ENCODE measurements at regions of chr11 and their contacts with region 1.

Region 1: GRCh38 chr11:85941380-85941973 is 86.3 kb downstream of the CCDC83 start:
- DNase-seq: peak; percentile 37
- H3K4me3 ChIP-seq: no peak overlapping the region
- H3K27ac ChIP-seq: no peak overlapping the region
- H3K4me1 ChIP-seq: no peaks in the 10 kb centered on the region
- H3K27me3 ChIP-seq: no peaks in the 10 kb centered on the region
- CTCF ChIP-seq: peak in 3 of 4 experiments; percentile 55 to 70 (median 61)
- POLR2A ChIP-seq: no peak

Region 2: DNA sequence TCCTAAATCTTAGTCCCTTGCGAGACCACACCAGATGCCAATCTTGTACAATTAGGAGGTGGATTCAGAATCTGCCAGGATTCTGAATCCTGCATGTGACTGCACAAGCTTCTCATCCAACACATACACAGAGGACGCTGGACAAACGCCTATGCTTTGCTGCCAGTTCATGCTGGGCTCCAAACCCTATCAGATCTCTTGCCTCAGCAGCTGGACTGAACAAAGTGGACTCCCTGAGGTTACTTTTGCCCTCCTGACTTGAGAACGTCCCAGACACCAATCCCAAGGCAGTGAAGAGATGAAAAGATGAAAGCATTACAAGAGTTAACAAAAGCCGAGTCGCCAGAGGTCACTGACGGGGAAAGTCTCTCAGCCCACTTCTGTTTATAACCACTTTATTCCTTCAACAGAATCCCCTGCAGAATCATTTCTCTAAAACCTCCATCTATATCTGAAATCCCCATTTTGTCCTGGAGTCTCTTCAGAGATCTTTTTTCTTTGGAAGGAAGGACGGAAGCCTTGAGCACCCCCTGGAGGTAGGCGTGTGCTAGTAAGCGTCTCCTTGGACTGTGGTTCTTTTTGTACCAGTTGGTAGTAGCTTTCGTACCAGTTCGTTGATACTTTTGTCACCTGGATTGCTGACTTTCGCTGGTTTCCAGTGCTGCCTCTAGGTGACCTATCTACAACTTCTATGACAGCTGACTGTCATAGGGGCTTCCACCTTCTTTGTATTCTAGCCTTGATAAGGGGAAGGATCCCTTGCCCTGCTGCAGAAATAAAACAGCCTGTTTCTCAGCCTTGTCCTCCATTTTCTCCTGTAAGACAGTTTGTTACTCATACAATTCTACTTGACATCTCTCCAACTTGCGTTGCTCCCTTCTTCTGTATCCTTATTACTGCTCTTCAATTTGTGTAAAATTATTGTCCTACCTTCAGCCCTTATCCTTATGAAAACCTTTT is 276.9 kb after region 1 on chr11:
- intact Hi-C with region 1: loop called (anchors 2 kb)
- DNase-seq: peak; percentile 46
- H3K4me3 ChIP-seq: no peak overlapping the region
- H3K27ac ChIP-seq: no peak overlapping the region
- H3K4me1 ChIP-seq: no peaks in the 10 kb centered on the region
- H3K27me3 ChIP-seq: no peaks in the 10 kb centered on the region
- CTCF ChIP-seq: peak; percentile 42 to 85 (median 78)
- POLR2A ChIP-seq: no peak

Region 3: GRCh38 chr11:86291466-86292262 is 350.2 kb after region 1 on chr11:
- intact Hi-C with region 1: loop called (anchors 10 kb)
- DNase-seq: peak; percentile 12
- H3K4me3 ChIP-seq: no peak overlapping the region
- H3K27ac ChIP-seq: no peak overlapping the region
- H3K4me1 ChIP-seq: no peaks in the 10 kb centered on the region
- H3K27me3 ChIP-seq: no peaks in the 10 kb centered on the region
- CTCF ChIP-seq: peak; percentile 16 to 56 (median 39)
- POLR2A ChIP-seq: no peak

Region 4: DNA sequence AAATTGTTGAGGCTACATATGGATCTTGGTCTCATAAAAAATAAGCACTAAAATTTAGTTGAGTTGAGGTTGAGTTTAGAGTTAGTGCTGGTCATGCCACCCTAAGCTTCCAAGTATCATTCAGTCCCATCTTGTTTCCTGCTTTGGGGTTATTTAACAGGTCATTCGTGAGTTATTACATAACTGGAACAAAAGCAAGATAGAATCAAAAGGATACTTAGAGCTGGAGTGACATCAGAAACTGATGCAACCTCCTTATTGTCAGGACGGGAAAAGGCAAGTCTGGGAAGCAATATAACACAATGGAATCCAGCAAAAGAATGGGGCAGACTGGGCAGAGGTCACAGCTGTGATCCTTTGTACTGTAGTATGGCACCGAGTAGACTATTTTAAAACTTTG is 854.4 kb after region 1 on chr11:
- intact Hi-C with region 1: no loop called
- DNase-seq: no peak
- H3K4me3 ChIP-seq: no peak overlapping the region
- H3K27ac ChIP-seq: no peak overlapping the region
- H3K4me1 ChIP-seq: no peaks in the 10 kb centered on the region
- H3K27me3 ChIP-seq: no peaks in the 10 kb centered on the region
- CTCF ChIP-seq: no peak
- POLR2A ChIP-seq: no peak